ENCODE measurements at regions of chr20 and their contacts with region 1.

Region 1: DNA sequence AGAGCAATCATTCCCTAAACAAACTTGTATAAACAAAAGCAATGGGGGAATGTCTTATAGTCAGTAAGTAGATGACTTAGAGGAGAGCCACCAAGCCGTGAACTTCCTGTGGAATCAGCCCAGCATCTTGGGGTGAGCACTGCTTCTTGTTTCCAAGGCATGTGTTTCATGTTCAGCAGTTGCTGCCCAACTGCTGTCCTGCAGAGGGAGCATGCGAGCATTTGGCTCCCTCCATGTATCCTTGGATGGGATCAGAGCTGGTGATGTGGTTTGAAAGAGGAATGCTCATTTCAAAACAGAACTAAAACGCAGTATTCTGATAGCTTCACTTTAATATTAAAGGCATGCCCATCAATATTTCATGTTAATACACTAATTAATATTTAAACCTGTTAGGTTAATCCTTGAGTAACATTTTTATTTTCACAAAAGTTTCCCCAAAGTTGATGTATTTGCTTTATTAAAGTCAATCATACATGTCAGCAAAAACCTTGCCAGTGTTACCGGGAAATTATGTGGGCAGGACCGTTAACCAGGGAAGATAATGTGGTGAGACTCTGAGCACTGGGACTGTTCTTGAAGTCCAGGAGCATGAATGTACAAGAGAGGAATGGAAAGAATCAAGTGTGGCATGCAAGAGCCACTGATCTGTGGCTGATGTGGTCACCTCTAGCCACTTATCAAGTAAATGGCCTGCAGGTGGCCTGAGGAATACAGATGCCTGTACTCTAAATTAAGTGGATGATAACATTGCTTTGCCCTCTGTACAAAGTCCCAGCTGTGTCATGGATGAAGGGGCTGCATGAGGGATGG is 172.2 kb upstream of the GGTLC1 start:
- DNase-seq: peak; percentile 25 to 61 (median 50)
- H3K4me3 ChIP-seq: no peak overlapping the region
- H3K27ac ChIP-seq: no peak overlapping the region
- H3K4me1 ChIP-seq: no peaks in the 10 kb centered on the region
- H3K27me3 ChIP-seq: no peaks in the 10 kb centered on the region

Region 2: GRCh38 chr20:24150406-24150805 is 10.4 kb before region 1 on chr20:
- CTCF ChIA-PET with region 1: interaction called, 12 read pairs
- POLR2A ChIA-PET with region 1: no interaction called
- DNase-seq: no peak
- H3K4me3 ChIP-seq: no peak overlapping the region
- H3K27ac ChIP-seq: no peak overlapping the region
- H3K4me1 ChIP-seq: peaks cover 0 to 11% (median 0%) of the 10 kb centered on the region in 4 experiments
- H3K27me3 ChIP-seq: peaks cover 0 to 4% (median 0%) of the 10 kb centered on the region in 5 experiments